ENCODE measurements at regions of chr20 and their contacts with region 1.

Region 1: GRCh38 chr20:32743237-32744112 is at the start of gene COMMD7:
- DNase-seq: peak; percentile 68
- H3K4me3 Mint-ChIP-seq: peak within 1 kb of the TSS; percentile 98
- H3K27ac Mint-ChIP-seq: peak within 1 kb of the TSS; percentile 95
- H3K4me1 Mint-ChIP-seq: peaks cover 26% of the 10 kb centered on the region
- H3K27me3 Mint-ChIP-seq: no peaks in the 10 kb centered on the region
- total RNA-seq, gene COMMD7: 41.3 and 43.0 TPM in 2 replicates

Region 2: GRCh38 chr20:32535953-32536823 is 207.3 kb before region 1 on chr20:
- intact Hi-C with region 1: loop called (anchors 5 kb)
- DNase-seq: peak; percentile 76
- H3K4me3 Mint-ChIP-seq: peak overlapping the region; percentile 76
- H3K27ac Mint-ChIP-seq: peak overlapping the region; percentile 90
- H3K4me1 Mint-ChIP-seq: peaks cover 84% of the 10 kb centered on the region
- H3K27me3 Mint-ChIP-seq: no peaks in the 10 kb centered on the region

Region 3: GRCh38 chr20:32648761-32649650 is 94.5 kb before region 1 on chr20:
- intact Hi-C with region 1: no loop called
- DNase-seq: no peak
- H3K4me3 Mint-ChIP-seq: no peak overlapping the region
- H3K27ac Mint-ChIP-seq: no peak overlapping the region
- H3K4me1 Mint-ChIP-seq: peaks cover 5% of the 10 kb centered on the region
- H3K27me3 Mint-ChIP-seq: peaks cover 5% of the 10 kb centered on the region

Region 4: DNA sequence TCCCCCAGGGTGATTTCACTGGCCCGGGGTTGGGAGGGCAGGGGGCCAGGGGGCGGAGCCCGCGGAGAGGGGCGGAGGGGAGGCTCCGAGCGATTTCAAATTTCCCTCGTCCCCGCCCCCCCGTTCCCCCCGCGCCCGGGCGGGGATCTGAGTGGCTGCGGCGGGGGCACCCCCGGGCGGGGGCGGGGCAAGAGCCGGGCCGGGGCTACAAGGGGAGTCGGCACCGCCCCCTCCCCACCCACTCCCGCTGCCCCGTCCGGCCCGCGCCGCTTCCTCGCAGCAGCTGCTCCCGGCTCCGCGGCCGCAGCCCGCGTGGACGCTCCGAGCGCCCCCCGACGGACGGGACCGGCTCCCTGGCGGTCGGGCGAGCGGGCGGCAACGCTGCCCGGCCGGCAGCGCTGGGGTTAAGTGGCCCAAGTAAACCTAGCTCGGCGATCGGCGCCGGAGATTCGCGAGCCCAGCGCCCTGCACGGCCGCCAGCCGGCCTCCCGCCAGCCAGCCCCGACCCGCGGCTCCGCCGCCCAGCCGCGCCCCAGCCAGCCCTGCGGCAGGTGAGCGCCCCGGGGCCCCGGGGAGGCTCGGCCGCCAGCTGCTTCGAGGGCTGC is 18.8 kb after region 1 on chr20 and contains the start of gene DNMT3B:
- intact Hi-C with region 1: loop called (anchors 1 kb)
- DNase-seq: peak; percentile 66
- H3K4me3 Mint-ChIP-seq: peak within 1 kb of the TSS; percentile 82
- H3K27ac Mint-ChIP-seq: peak within 1 kb of the TSS; percentile 18
- H3K4me1 Mint-ChIP-seq: peaks cover 12% of the 10 kb centered on the region
- H3K27me3 Mint-ChIP-seq: peaks cover 19% of the 10 kb centered on the region
- total RNA-seq, gene DNMT3B: 0.75 and 0.93 TPM in 2 replicates

Region 5: GRCh38 chr20:32779500-32780211 is 36.2 kb after region 1 on chr20:
- intact Hi-C with region 1: loop called (anchors 5 kb)
- DNase-seq: no peak
- H3K4me3 Mint-ChIP-seq: no peak overlapping the region
- H3K27ac Mint-ChIP-seq: no peak overlapping the region
- H3K4me1 Mint-ChIP-seq: peaks cover 21% of the 10 kb centered on the region
- H3K27me3 Mint-ChIP-seq: no peaks in the 10 kb centered on the region

Region 6: DNA sequence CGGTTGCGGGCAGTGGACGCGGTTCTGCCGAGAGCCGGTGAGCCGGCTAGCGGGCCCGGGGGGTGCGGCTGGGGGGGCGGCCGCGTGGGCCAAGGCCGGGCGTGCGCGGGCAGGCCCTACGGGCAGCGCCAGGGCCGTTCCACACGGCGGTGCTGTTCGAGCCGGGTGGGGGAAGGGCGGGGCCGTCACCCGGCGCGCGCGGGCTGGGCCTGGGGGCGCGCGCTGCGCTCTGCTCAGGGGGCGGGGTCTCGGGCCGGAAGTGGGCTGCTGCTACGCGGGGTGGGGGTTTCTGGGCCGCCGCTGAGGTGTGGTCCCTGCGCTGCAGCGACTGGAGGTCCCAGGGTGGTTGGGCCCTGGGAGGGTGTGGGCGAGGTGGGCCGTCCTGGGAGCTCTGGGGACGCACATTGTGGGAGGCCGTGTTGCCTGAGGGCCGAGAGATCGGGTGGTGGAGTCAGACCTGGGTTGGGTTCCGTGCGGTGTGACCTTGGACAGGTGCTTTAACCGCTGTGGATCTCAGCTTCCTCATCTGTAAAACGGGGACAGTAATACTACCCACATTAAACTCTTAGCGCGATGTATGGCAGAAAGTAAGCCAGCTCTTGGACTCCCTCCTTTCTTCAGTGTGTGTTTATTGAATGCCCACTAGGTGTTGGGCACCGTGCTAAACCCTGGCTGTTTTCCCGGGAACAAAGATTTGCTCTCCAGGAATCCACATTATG is 76.7 kb after region 1 on chr20:
- intact Hi-C with region 1: loop called (anchors 5 kb)
- DNase-seq: no peak
- H3K4me3 Mint-ChIP-seq: peak overlapping the region; percentile 96
- H3K27ac Mint-ChIP-seq: peak overlapping the region; percentile 94
- H3K4me1 Mint-ChIP-seq: peaks cover 39% of the 10 kb centered on the region
- H3K27me3 Mint-ChIP-seq: no peaks in the 10 kb centered on the region